ENCODE measurements at regions of chr10 and their contacts with region 1.

Region 1: GRCh38 chr10:68331455-68332258 is at the start of gene HNRNPH3:
- DNase-seq: peak; percentile 99
- H3K4me3 Mint-ChIP-seq: peak within 1 kb of the TSS; percentile 100
- H3K27ac Mint-ChIP-seq: peak within 1 kb of the TSS; percentile 100
- H3K4me1 Mint-ChIP-seq: peaks cover 40% of the 10 kb centered on the region
- H3K27me3 Mint-ChIP-seq: no peaks in the 10 kb centered on the region
- total RNA-seq, gene HNRNPH3: 145 to 150 TPM

Region 2: DNA sequence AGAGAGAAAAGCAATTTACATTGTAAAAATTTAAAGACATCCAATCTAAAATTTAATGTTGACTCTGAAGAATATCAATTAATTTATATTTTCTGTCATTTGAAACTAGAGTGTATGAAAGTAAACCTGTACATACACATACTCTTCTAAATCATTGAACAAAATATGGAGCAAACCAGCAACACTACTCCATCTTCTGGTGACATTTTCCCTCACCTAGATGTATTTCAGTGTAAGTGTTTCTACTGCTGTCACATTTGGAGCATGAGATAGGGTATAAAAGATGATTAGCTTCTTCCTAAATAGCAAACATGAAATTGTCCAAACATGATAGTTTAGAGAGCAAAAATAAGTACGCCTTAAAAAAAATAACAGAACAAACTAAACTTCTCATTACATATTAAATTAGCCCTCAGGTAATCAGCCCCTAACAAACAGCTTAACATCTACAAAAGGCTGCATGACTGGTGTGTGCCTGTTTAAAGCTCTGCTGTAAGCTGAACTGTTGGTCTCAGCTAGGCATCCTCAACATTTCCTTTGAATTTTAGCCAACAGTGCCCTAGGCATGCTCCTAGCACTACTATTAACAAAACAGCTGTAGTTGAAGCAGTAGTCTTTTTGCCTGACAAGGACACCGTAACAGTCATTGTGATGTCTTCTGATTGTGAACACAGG is 825.4 kb before region 1 on chr10:
- CTCF ChIA-PET with region 1: no interaction called
- intact Hi-C with region 1: no loop called
- DNase-seq: no peak
- H3K4me3 Mint-ChIP-seq: no peak overlapping the region
- H3K27ac Mint-ChIP-seq: no peak overlapping the region
- H3K4me1 Mint-ChIP-seq: no peaks in the 10 kb centered on the region
- H3K27me3 Mint-ChIP-seq: no peaks in the 10 kb centered on the region

Region 3: GRCh38 chr10:67764012-67764822 is 567.4 kb before region 1 on chr10:
- CTCF ChIA-PET with region 1: no interaction called
- intact Hi-C with region 1: loop called (anchors 1 kb)
- DNase-seq: peak; percentile 97
- H3K4me3 Mint-ChIP-seq: peak overlapping the region; percentile 93
- H3K27ac Mint-ChIP-seq: peak overlapping the region; percentile 99
- H3K4me1 Mint-ChIP-seq: peaks cover 4% of the 10 kb centered on the region
- H3K27me3 Mint-ChIP-seq: peaks cover 5% of the 10 kb centered on the region

Region 4: GRCh38 chr10:67884313-67884841 is 447.3 kb before region 1 on chr10 and contains the start of gene SIRT1:
- CTCF ChIA-PET with region 1: interaction called, 3 read pairs
- intact Hi-C with region 1: loop called (anchors 1 kb)
- DNase-seq: peak; percentile 88
- H3K4me3 Mint-ChIP-seq: peak within 1 kb of the TSS; percentile 90
- H3K27ac Mint-ChIP-seq: peak within 1 kb of the TSS; percentile 89
- H3K4me1 Mint-ChIP-seq: peaks cover 25% of the 10 kb centered on the region
- H3K27me3 Mint-ChIP-seq: no peaks in the 10 kb centered on the region
- total RNA-seq, gene SIRT1: 18.7 to 18.8 TPM

Region 5: GRCh38 chr10:68202960-68203353 is 128.7 kb before region 1 on chr10:
- CTCF ChIA-PET with region 1: no interaction called
- intact Hi-C with region 1: no loop called
- DNase-seq: peak; percentile 5
- H3K4me3 Mint-ChIP-seq: no peak overlapping the region
- H3K27ac Mint-ChIP-seq: no peak overlapping the region
- H3K4me1 Mint-ChIP-seq: no peaks in the 10 kb centered on the region
- H3K27me3 Mint-ChIP-seq: peaks cover 19% of the 10 kb centered on the region

Region 6: DNA sequence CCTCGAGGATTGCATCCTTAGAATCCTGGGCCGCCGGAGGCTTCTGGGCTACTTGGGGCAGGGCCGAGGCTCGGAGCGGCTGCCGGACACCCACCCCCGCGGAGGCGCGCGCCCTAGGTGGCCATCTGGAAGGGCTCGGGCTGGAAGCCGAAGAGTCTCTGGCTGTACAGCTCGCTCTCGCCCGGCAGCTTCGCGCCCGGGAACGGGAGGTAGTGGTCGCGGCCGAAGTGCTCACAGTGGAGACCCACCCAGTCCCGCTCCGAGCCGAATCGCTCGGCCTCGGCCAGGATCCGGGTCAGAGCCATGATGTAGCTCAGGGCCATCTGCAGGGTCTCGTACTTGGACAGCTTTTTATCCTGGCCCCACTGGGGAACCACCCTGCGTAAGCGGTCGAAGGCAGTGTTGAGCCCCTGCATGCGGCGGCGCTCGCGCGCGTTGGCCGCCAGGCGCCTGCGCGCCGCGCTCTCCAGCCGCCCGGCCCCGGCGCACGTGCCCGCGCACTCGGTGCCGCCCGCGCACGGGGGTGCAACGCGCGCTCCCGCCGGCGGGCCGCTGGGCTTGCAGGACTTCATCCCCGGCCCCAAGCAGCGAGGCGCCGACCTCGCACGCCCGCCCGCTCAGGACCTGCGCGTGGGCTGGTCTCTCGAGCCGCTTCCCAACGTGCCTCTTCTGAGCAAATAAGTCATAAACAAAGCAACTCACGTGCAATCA is 100.4 kb before region 1 on chr10:
- CTCF ChIA-PET with region 1: no interaction called
- intact Hi-C with region 1: loop called (anchors 1 kb)
- DNase-seq: peak; percentile 38
- H3K4me3 Mint-ChIP-seq: peak overlapping the region; percentile 71
- H3K27ac Mint-ChIP-seq: no peak overlapping the region
- H3K4me1 Mint-ChIP-seq: peaks cover 7% of the 10 kb centered on the region
- H3K27me3 Mint-ChIP-seq: peaks cover 35% of the 10 kb centered on the region

Region 7: DNA sequence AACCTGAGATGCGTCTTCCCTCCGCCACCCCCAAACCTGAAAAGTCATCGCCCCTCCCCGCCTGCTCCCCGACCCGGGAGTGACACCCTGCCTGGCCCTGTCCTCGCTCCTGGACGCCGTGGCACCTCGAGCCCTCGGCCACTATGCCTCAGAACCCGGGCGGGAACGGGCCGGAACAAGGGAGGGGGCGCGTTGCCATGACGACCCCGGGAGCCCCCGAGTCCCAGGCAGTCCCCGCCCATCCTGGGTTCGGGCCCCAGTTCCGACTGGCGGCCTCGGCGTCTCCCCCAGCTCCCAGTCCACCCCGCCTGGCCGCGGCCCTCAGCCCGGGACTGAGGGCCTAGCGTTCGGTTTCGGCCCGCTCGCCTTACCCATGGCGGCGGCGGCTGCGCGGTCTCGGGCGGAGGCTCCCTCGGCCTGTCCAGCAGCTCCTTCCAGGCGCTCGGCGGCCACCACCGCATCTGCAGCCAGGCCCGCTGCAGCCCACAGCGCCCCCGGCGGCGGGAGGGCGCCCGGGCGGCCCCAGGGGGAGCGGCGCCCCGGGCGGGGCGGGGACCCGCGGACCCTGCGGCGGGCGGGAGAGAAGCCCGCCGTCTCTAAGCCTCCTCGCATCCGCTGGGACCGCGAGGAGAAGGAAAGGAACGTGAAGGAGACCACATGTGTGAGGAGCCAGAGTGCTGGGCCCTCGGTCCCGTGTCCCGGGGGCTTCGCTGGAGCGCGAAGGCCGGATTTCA is 75.3 kb after region 1 on chr10 and contains the start of gene RUFY2:
- CTCF ChIA-PET with region 1: no interaction called
- intact Hi-C with region 1: loop called (anchors 2 kb)
- DNase-seq: peak; percentile 73
- H3K4me3 Mint-ChIP-seq: peak within 1 kb of the TSS; percentile 89
- H3K27ac Mint-ChIP-seq: peak within 1 kb of the TSS; percentile 59
- H3K4me1 Mint-ChIP-seq: peaks cover 16% of the 10 kb centered on the region
- H3K27me3 Mint-ChIP-seq: no peaks in the 10 kb centered on the region
- total RNA-seq, gene RUFY2: 5.2 to 6.7 TPM

Region 8: GRCh38 chr10:68526626-68527307 is 195.1 kb after region 1 on chr10:
- CTCF ChIA-PET with region 1: no interaction called
- intact Hi-C with region 1: loop called (anchors 2 kb)
- DNase-seq: no peak
- H3K4me3 Mint-ChIP-seq: peak overlapping the region; percentile 93
- H3K27ac Mint-ChIP-seq: peak overlapping the region; percentile 87
- H3K4me1 Mint-ChIP-seq: peaks cover 5% of the 10 kb centered on the region
- H3K27me3 Mint-ChIP-seq: no peaks in the 10 kb centered on the region

Region 9: DNA sequence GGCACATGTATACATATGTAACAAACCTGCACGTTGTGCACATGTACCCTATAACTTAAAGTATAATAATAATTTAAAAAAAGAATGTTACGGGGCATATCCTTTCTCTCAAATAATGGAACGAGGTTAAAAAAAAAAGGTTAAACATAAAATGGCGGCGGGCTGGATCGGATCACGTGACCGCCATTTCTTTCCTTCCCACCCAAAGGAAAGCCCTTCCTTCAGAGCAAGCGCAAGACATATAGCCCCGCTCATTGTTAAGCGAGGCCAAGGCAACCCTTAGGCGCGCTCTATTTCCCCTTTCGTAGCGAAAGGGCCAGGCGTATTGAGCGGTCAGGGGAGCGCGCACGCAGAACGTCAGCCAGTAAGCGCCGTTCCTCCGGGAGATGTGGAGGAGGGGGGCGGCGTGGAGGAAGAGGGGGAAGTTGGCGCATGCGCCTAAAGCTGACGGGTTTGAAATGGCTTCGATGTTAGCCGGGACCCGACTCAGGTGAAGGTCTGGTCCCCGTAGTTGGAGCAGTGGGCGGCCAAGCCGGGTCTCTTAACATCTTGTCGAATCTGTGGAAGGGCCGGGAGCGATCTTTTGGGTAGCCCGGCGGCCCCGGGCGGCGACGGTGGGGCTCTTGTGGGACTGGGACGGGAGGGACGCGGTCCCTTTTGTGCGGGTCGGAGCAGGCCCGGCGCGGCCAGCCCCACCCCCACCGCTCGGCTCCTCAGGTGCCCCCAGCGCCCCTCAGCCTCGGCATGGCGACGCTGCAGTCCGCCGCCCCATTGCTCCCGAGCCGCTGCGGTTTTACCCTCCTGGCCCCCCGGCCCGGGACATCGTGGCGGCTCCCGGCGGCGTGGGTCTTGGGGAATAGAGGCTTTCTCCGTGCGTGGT is 389.4 kb after region 1 on chr10 and contains the start of gene CCAR1:
- CTCF ChIA-PET with region 1: no interaction called
- intact Hi-C with region 1: loop called (anchors 1 kb)
- DNase-seq: peak; percentile 98
- H3K4me3 Mint-ChIP-seq: peak within 1 kb of the TSS; percentile 96
- H3K27ac Mint-ChIP-seq: peak within 1 kb of the TSS; percentile 96
- H3K4me1 Mint-ChIP-seq: peaks cover 16% of the 10 kb centered on the region
- H3K27me3 Mint-ChIP-seq: no peaks in the 10 kb centered on the region
- total RNA-seq, gene CCAR1: 80.7 to 87.9 TPM

Measured in activated naive CD4-positive, alpha-beta T cell treated with anti-CD3 and anti-CD28 coated beads for 36 hours (primary cell).